ENCODE measurements at regions of chr20 and their contacts with region 1.

Region 1: GRCh38 chr20:10673988-10674711 is at the start of gene JAG1:
- DNase-seq: peak; percentile 99
- ATAC-seq: peak; percentile 88
- total RNA-seq, gene JAG1: 24.4 TPM

Region 2: DNA sequence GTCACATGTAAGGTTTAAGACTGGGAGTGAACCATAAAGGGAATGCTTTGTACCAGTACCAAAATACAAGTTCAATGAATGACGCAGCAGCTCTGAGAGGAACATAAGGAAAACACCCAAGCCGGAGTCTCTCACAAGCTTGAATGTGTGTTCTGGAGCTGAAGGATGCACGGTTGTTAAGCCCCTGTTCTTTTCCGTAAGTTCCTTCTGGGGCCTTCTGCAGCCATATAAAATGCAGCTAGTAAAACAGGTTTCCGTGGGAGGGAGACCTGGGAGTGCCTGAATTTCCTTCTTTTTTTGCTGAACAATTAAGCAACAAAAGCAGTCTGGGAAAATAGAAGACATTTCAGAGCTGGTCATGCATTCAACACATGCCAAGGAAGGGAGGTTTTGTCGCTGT is 72.9 kb after region 1 on chr20:
- intact Hi-C with region 1: loop called (anchors 2 kb)
- DNase-seq: no peak
- ATAC-seq: no peak

Region 3: DNA sequence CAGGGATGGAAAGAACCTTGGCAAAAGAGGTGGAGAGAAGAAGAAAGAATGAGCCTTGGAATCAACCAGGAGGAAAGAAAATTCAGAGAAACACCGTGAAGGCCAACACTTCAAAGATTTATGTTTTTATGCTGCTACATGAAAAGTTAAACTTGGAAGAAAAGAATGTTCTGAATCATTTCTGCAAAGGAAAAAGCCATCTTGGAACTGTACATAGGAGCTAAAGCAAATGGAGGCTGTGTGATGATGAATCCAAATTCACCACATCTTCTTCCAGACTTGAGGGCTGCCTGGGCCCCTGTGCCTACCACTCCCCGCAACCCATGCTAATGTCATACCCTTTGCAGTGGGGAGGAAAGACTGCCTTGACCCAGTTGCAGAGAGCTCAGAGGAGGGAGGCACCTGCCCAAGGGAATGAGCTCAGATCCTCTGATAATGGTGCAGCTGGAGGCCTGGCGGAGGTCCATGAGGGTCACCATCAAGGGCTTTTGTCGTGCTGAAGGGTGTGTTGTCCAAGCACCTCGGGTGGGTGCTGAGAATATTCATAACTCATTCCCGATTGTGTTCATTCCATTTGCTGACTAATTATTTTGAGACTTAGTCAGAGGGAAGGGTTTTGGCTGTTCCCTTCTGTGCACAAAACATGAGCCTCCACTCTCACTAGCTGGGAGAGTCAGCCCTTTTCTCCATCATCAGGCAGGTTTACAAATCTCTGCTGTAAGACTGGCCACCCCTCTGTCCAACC is 245.4 kb after region 1 on chr20:
- intact Hi-C with region 1: loop called (anchors 10 kb)
- DNase-seq: no peak
- ATAC-seq: peak; percentile 57

Region 4: GRCh38 chr20:11204926-11205768 is 531.0 kb after region 1 on chr20:
- intact Hi-C with region 1: loop called (anchors 2 kb)
- DNase-seq: no peak
- ATAC-seq: peak; percentile 89

Measured in Right ventricle myocardium inferior (tissue), 1 donor.